ENCODE measurements at regions of chr19 and their contacts with region 1.

Region 1: GRCh38 chr19:12974301-12975220 is 5.2 kb downstream of the DAND5 start:
- DNase-seq: no peak
- H3K4me3 ChIP-seq: no peak overlapping the region
- H3K27ac ChIP-seq: peak overlapping the region in 1 of 2 donors; percentile 9
- H3K4me1 ChIP-seq: no peaks in the 10 kb centered on the region
- H3K27me3 ChIP-seq: no peaks in the 10 kb centered on the region
- CTCF ChIP-seq: no peak
- POLR2A ChIP-seq: no peak

Region 2: DNA sequence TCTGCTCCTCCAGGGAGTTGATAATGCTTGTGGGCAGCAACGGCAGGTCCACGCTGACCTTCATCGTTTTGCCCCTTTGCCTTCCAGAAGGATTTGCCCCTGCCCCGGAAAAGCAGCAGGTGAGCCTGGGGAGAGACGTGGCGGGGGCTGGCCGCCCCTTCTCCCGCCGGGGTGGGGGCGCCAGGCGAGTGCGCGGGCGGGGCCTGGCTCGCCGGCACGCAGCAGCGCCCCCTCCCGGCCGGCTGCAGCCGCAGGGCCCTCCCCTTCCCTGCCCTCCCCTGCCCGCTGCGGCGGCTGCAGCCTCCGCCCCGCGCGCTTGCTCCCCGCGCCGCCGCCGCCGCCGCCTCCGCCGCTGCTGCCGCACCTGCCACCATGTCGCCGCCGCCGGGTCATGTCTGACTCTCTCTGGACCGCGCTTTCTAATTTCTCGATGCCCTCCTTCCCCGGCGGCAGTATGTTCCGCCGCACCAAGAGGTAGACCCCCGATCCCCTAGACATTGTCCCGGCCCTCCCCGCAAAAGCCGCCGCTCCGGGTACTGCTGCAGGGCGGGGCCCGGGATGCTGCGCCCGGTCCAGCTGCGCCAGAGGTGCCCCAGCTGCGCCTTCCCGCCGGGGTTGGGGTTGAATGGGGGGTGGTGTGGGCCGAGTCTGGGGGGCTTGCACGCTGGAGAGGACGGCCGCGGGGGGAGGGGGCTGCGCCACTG is 136.2 kb before region 1 on chr19 and contains the start of gene MAST1:
- intact Hi-C with region 1: no loop called
- DNase-seq: no peak
- H3K4me3 ChIP-seq: peak within 1 kb of the TSS in 2 of 3 donors; percentile 35 to 57
- H3K27ac ChIP-seq: no peak within 1 kb of the TSS
- H3K4me1 ChIP-seq: peaks cover 9 to 10% of the 10 kb centered on the region in 2 donors
- H3K27me3 ChIP-seq: peaks cover 21 to 95% of the 10 kb centered on the region in 2 donors
- CTCF ChIP-seq: peak in 1 of 3 donors; percentile 32
- POLR2A ChIP-seq: no peak
- total RNA-seq, gene MAST1: 0.88 TPM in 1 of 3 donors, not detected in the others

Region 3: DNA sequence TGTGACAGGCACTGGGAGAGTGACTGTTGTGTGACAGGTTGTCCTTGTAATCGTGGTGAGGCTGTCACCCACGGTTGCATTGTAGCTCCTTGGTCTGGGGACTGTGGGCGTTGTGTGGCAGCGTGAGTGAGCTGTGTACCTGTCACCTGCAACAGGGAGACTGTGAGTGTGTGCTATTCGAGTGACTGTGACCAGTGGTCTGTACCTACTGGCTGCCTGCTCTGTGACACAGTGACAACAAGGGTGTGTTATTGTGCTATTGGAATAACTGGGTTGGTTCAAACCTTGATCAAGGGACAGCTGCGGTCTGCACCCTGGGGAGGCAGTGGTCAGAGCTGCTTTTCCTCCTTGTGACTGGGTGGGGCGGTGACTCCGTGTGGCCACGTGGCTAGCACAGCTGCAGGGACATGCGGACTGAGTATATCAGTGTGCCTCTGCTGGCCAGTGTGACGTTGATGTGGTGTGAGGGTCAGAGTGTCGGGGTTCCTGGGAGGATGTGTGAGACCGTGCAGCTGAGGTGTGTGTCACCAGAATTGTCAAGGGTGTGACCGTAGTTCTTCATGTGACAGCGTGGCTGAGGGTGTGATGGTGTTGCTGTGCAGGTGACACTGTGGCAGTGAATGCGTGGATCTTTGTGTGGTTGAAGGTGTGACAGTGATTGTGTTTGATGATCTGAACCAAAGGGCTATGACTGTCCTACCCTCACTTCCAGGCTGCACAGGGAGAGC is 10.7 kb after region 1 on chr19:
- intact Hi-C with region 1: no loop called
- DNase-seq: peak in 1 of 2 donors; percentile 80
- H3K4me3 ChIP-seq: no peak overlapping the region
- H3K27ac ChIP-seq: peak overlapping the region; percentile 65 to 84
- H3K4me1 ChIP-seq: peaks cover 0 to 7% of the 10 kb centered on the region in 2 donors
- H3K27me3 ChIP-seq: no peaks in the 10 kb centered on the region
- CTCF ChIP-seq: no peak
- POLR2A ChIP-seq: no peak

Region 4: GRCh38 chr19:13014101-13014920 is 39.8 kb after region 1 on chr19:
- intact Hi-C with region 1: loop called (anchors 1 kb)
- DNase-seq: no peak
- H3K4me3 ChIP-seq: peak overlapping the region; percentile 44 to 76 (median 45)
- H3K27ac ChIP-seq: peak overlapping the region; percentile 94 to 95
- H3K4me1 ChIP-seq: peaks cover 17 to 34% of the 10 kb centered on the region in 2 donors
- H3K27me3 ChIP-seq: no peaks in the 10 kb centered on the region
- CTCF ChIP-seq: no peak
- POLR2A ChIP-seq: no peak